Activated CD4-positive, alpha-beta T cell treated with anti-CD3 and anti-CD28 coated beads for 36 hours (primary cell): ENCODE measurements at regions of chr16 and their contacts with region 1.

Region 1: GRCh38 chr16:66872943-66873684 is 7.2 kb upstream of the PDP2 start:
- DNase-seq: peak; percentile 95
- ATAC-seq: peak; percentile 77
- H3K4me3 Mint-ChIP-seq: peak overlapping the region; percentile 65
- H3K27ac Mint-ChIP-seq: peak overlapping the region; percentile 72
- H3K4me1 Mint-ChIP-seq: peaks cover 48% of the 10 kb centered on the region
- H3K27me3 Mint-ChIP-seq: no peaks in the 10 kb centered on the region

Region 2: GRCh38 chr16:66516808-66517585 is 356.1 kb before region 1 on chr16:
- CTCF ChIA-PET with region 1: no interaction called
- POLR2A ChIA-PET with region 1: no interaction called
- intact Hi-C with region 1: loop called (anchors 1 to 10 kb)
- DNase-seq: peak; percentile 91
- ATAC-seq: peak; percentile 90
- H3K4me3 Mint-ChIP-seq: peak overlapping the region; percentile 65
- H3K27ac Mint-ChIP-seq: peak overlapping the region; percentile 92
- H3K4me1 Mint-ChIP-seq: peaks cover 66% of the 10 kb centered on the region
- H3K27me3 Mint-ChIP-seq: no peaks in the 10 kb centered on the region

Region 3: GRCh38 chr16:66696669-66697630 is 176.2 kb before region 1 on chr16 and contains the start of gene CMTM4:
- CTCF ChIA-PET with region 1: no interaction called
- POLR2A ChIA-PET with region 1: no interaction called
- intact Hi-C with region 1: loop called in 1 of 2 experiments (anchors 2 kb)
- DNase-seq: peak; percentile 87
- ATAC-seq: peak; percentile 96
- H3K4me3 Mint-ChIP-seq: peak within 1 kb of the TSS; percentile 73
- H3K27ac Mint-ChIP-seq: no peak within 1 kb of the TSS
- H3K4me1 Mint-ChIP-seq: peaks cover 12% of the 10 kb centered on the region
- H3K27me3 Mint-ChIP-seq: peaks cover 10% of the 10 kb centered on the region
- total RNA-seq, gene CMTM4: 3.3 to 4.5 TPM

Region 4: GRCh38 chr16:66751303-66751991 is 121.7 kb before region 1 on chr16 and contains the start of gene DYNC1LI2:
- CTCF ChIA-PET with region 1: interaction called, 8 read pairs
- POLR2A ChIA-PET with region 1: no interaction called
- intact Hi-C with region 1: loop called in 1 of 2 experiments (anchors 1 kb)
- DNase-seq: peak; percentile 89
- ATAC-seq: peak; percentile 93
- H3K4me3 Mint-ChIP-seq: peak within 1 kb of the TSS; percentile 81
- H3K27ac Mint-ChIP-seq: peak within 1 kb of the TSS; percentile 80
- H3K4me1 Mint-ChIP-seq: peaks cover 38% of the 10 kb centered on the region
- H3K27me3 Mint-ChIP-seq: peaks cover 9% of the 10 kb centered on the region
- total RNA-seq, gene DYNC1LI2: 32.3 to 35.7 TPM

Region 5: GRCh38 chr16:66894948-66895688 is 22.0 kb after region 1 on chr16:
- CTCF ChIA-PET with region 1: interaction called, 12 read pairs
- POLR2A ChIA-PET with region 1: no interaction called
- intact Hi-C with region 1: no loop called
- DNase-seq: peak; percentile 81
- ATAC-seq: peak; percentile 89
- H3K4me3 Mint-ChIP-seq: no peak overlapping the region
- H3K27ac Mint-ChIP-seq: no peak overlapping the region
- H3K4me1 Mint-ChIP-seq: peaks cover 8% of the 10 kb centered on the region
- H3K27me3 Mint-ChIP-seq: no peaks in the 10 kb centered on the region

Region 6: GRCh38 chr16:66940226-66940625 is 67.1 kb after region 1 on chr16:
- CTCF ChIA-PET with region 1: no interaction called
- POLR2A ChIA-PET with region 1: no interaction called
- intact Hi-C with region 1: no loop called
- DNase-seq: no peak
- ATAC-seq: no peak
- H3K4me3 Mint-ChIP-seq: no peak overlapping the region
- H3K27ac Mint-ChIP-seq: no peak overlapping the region
- H3K4me1 Mint-ChIP-seq: peaks cover 27% of the 10 kb centered on the region
- H3K27me3 Mint-ChIP-seq: no peaks in the 10 kb centered on the region

Region 7: GRCh38 chr16:67198997-67199810 is 326.1 kb after region 1 on chr16 and contains the start of gene ELMO3:
- CTCF ChIA-PET with region 1: no interaction called
- POLR2A ChIA-PET with region 1: no interaction called
- intact Hi-C with region 1: no loop called
- DNase-seq: no peak
- ATAC-seq: no peak
- H3K4me3 Mint-ChIP-seq: no peak within 1 kb of the TSS
- H3K27ac Mint-ChIP-seq: peak within 1 kb of the TSS; percentile 49
- H3K4me1 Mint-ChIP-seq: peaks cover 11% of the 10 kb centered on the region
- H3K27me3 Mint-ChIP-seq: no peaks in the 10 kb centered on the region
- total RNA-seq, gene ELMO3: 3.0 to 4.6 TPM

Region 8: GRCh38 chr16:67311607-67312488 is 438.7 kb after region 1 on chr16:
- CTCF ChIA-PET with region 1: no interaction called
- POLR2A ChIA-PET with region 1: no interaction called
- intact Hi-C with region 1: loop called in 1 of 2 experiments (anchors 1 kb)
- DNase-seq: peak; percentile 94
- ATAC-seq: peak; percentile 98
- H3K4me3 Mint-ChIP-seq: peak overlapping the region; percentile 1
- H3K27ac Mint-ChIP-seq: peak overlapping the region; percentile 98
- H3K4me1 Mint-ChIP-seq: peaks cover 40% of the 10 kb centered on the region
- H3K27me3 Mint-ChIP-seq: peaks cover 1% of the 10 kb centered on the region